Right ventricle myocardium inferior (tissue), 1 donor: ENCODE measurements at regions of chrX and their contacts with region 1.

Region 1: DNA sequence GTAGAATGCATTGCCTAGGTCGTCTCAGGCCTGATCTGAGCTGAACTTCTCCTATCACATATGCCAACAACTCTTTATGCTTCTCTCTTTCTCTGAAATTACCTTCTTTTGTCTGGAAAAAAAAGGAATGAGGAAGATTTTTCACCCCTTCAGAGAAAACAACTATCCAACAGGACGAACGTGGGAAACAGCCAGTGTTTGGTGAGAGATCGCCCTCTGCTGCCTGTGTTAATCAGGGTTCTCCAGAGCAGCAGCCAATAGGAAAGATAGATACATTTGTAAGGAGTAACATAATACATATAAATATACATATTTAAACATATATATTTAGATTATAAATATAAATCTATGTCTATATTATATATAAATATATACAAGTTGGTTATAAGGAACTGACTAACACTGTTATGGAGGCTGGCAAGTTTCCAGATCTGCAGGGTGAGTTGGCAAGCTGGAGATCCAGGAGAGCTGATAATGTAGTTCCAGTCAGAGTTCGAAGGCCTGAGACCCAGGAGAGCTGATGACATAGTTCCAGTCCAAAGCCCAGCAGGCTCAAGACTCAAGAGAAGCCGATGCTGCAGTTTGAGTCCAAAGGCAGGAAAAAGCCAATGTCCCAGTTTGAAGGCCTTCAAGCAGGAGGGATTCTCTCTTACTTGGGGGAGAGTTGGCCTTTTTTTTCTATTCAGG is 13.3 kb downstream of the CETN2 start:
- DNase-seq: no peak
- ATAC-seq: no peak

Region 2: DNA sequence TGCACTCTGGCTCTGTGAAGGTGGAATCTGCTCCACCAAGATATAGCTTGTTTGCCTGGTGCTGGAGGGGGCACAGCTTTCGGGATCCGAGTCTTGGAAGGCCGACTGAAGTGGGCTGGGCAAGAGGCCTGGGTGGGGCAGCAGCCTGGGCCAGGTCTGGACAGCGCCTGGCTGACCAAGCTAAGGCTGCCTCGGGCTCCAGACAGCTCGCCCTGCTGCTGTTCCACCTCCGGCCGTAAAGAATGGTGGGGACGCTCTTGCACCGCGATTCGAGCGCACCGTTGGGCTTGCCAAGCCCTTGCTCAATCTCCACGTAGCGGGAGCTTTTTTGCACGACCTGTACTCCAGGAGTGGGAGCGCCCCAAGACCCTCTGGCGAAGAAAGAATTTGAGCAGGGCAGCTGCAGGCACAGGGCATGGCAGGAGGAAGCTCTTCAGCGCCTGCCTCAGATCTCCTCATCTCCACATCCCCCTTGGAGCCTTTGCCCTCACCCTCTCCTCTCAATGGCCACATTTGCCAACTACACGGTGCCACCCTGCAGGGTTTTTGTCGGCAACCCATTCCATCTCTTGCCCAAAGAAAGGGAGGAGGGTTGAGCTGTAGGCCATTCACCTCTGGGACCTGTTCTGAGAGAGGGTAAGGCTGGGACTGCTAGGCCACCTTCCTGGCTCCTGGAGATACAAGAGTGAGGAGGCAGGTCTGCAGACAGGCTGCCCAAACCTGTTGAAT is 1063.7 kb before region 1 on chrX:
- intact Hi-C with region 1: loop called (anchors 10 kb)
- DNase-seq: no peak
- ATAC-seq: peak; percentile 84

Region 3: DNA sequence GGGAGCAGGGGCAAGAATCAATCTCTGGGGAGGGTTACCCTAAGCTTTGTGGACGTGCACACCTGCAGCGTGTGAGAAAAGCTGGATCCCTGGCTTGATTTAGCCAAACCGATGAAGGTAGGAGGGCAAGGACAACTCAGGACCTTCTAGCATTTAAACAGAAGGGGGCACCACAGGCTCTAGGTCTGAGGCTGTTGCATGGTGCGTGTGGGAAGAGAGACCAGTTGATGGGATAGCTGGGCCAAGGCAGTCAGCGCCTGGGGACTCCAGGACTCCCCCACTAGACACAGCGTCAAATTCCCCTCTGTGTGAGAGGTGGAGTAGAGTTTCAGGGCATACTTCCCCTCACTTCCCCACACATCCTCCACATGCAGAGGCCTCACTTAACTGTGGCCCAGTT is 175.2 kb before region 1 on chrX:
- intact Hi-C with region 1: loop called (anchors 2 kb)
- DNase-seq: no peak
- ATAC-seq: no peak